Posterior vena cava (tissue), 2 donors: ENCODE measurements at regions of chr17 and their contacts with region 1.

Region 1: GRCh38 chr17:36824678-36825091 is 112.6 kb upstream of the LHX1 start:
- DNase-seq: no peak

Region 2: GRCh38 chr17:36869856-36870719 is 45.4 kb after region 1 on chr17:
- intact Hi-C with region 1: loop called in 1 of 2 experiments (anchors 10 kb)
- DNase-seq: no peak